ENCODE measurements at regions of chr22 and their contacts with region 1.

Region 1: GRCh38 chr22:34493486-34493885 is 572.5 kb upstream of the ISX start:
- DNase-seq: no peak
- ATAC-seq: no peak
- H3K4me3 ChIP-seq: no peak overlapping the region
- H3K27ac ChIP-seq: no peak overlapping the region
- H3K4me1 ChIP-seq: no peaks in the 10 kb centered on the region
- H3K27me3 ChIP-seq: no peaks in the 10 kb centered on the region
- CTCF ChIP-seq: no peak
- POLR2A ChIP-seq: no peak
- RAD21 ChIP-seq: no peak

Region 2: GRCh38 chr22:34225278-34225677 is 268.2 kb before region 1 on chr22:
- CTCF ChIA-PET with region 1: no interaction called
- POLR2A ChIA-PET with region 1: no interaction called
- dilution Hi-C with region 1: no loop called
- in situ Hi-C with region 1: no loop called
- intact Hi-C with region 1: no loop called
- DNase-seq: no peak
- ATAC-seq: no peak
- H3K4me3 ChIP-seq: no peak overlapping the region
- H3K27ac ChIP-seq: no peak overlapping the region
- H3K4me1 ChIP-seq: no peaks in the 10 kb centered on the region
- H3K27me3 ChIP-seq: no peaks in the 10 kb centered on the region
- CTCF ChIP-seq: no peak
- POLR2A ChIP-seq: no peak
- RAD21 ChIP-seq: no peak

Region 3: DNA sequence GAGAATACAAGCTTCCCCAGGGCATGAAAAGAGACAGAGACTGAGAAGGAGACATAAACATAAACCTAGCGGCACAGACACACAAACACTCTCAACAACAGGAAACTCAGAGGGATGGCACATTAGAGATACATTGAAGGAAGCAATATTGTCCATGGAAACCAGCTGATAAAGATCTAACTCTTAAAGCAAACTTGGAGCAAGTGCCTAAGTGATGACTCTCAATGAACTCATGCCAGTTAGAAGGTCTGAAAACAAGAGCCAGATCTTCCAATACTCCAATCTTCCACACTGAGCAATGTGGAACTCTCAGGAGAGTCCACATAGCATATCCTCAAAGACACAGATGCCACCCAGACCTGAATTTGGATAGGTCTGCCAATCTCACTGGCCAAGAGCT is 403.6 kb after region 1 on chr22:
- CTCF ChIA-PET with region 1: no interaction called
- POLR2A ChIA-PET with region 1: interaction called, 10 read pairs
- dilution Hi-C with region 1: no loop called
- in situ Hi-C with region 1: no loop called
- intact Hi-C with region 1: no loop called
- DNase-seq: no peak
- ATAC-seq: no peak
- H3K4me3 ChIP-seq: no peak overlapping the region
- H3K27ac ChIP-seq: no peak overlapping the region
- H3K4me1 ChIP-seq: no peaks in the 10 kb centered on the region
- H3K27me3 ChIP-seq: no peaks in the 10 kb centered on the region
- CTCF ChIP-seq: no peak
- POLR2A ChIP-seq: no peak
- RAD21 ChIP-seq: no peak